ENCODE measurements at regions of chr1 and their contacts with region 1.

Region 1: GRCh38 chr1:6359216-6360116 is 34.1 kb downstream of the ACOT7 start:
- DNase-seq: peak in 1 of 10 donors; percentile 87

Region 2: DNA sequence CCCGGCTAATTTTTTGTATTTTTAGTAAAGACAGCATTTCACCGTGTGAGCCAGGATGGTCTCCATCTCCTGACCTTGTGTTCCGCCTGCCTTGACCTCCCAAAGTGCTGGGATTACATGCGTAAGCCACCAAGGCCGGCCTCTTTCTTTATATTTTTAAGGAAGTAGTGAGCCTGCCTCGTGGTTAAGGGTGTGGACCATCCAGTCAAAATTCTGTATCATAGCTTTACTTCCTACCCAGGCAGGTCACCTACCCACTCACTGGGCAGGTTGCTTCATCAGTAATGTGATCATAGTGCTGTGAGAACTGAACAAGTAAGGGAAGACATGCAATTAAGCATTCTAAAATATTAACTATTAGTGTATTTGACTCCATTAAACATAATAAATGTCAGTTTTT is 42.2 kb after region 1 on chr1:
- intact Hi-C with region 1: loop called (anchors 2 kb)
- DNase-seq: peak in 1 of 10 donors; percentile 21